PC-3 (cell line): ENCODE measurements at regions of chr15 and their contacts with region 1.

Region 1: DNA sequence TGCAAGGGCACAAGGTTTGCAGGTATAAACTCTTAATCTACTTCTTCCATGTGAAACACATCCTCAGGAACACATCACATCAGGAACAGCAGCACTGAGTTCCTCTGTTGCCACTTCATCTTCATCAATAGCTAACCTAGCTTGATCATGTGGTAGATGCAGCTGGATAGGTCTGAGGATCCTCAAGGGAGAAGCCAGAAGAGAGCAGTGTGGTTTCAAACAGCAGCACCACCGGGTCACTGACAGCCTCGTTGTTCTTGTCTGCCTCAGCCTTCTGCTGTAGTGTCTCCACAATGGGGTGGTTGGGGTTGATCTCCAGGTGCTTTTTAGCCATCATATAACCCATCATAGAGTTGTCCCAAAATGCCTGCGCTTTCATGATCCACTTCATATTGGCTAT is 58.8 kb downstream of the ADAM10 start:
- DNase-seq: no peak
- ATAC-seq: no peak
- H3K4me3 ChIP-seq: no peak overlapping the region
- H3K27ac ChIP-seq: no peak overlapping the region
- H3K4me1 ChIP-seq: no peaks in the 10 kb centered on the region
- H3K27me3 ChIP-seq: no peaks in the 10 kb centered on the region
- CTCF ChIP-seq: no peak

Region 2: GRCh38 chr15:58715266-58715917 is 24.7 kb after region 1 on chr15:
- CTCF ChIA-PET with region 1: no interaction called
- POLR2A ChIA-PET with region 1: interaction called, 17 read pairs
- intact Hi-C with region 1: no loop called
- DNase-seq: no peak
- ATAC-seq: no peak
- H3K4me3 ChIP-seq: no peak overlapping the region
- H3K27ac ChIP-seq: no peak overlapping the region
- H3K4me1 ChIP-seq: no peaks in the 10 kb centered on the region
- H3K27me3 ChIP-seq: no peaks in the 10 kb centered on the region
- CTCF ChIP-seq: no peak

Region 3: GRCh38 chr15:58770519-58770856 is 79.8 kb after region 1 on chr15:
- CTCF ChIA-PET with region 1: no interaction called
- POLR2A ChIA-PET with region 1: no interaction called
- intact Hi-C with region 1: no loop called
- DNase-seq: peak; percentile 61
- ATAC-seq: peak; percentile 52
- H3K4me3 ChIP-seq: peak overlapping the region; percentile 96
- H3K27ac ChIP-seq: peak overlapping the region; percentile 60
- H3K4me1 ChIP-seq: peaks cover 15% of the 10 kb centered on the region
- H3K27me3 ChIP-seq: no peaks in the 10 kb centered on the region
- CTCF ChIP-seq: no peak

Region 4: GRCh38 chr15:58793862-58794261 is 103.2 kb after region 1 on chr15:
- CTCF ChIA-PET with region 1: no interaction called
- POLR2A ChIA-PET with region 1: no interaction called
- intact Hi-C with region 1: no loop called
- DNase-seq: no peak
- ATAC-seq: no peak
- H3K4me3 ChIP-seq: no peak overlapping the region
- H3K27ac ChIP-seq: no peak overlapping the region
- H3K4me1 ChIP-seq: no peaks in the 10 kb centered on the region
- H3K27me3 ChIP-seq: no peaks in the 10 kb centered on the region
- CTCF ChIP-seq: no peak